ENCODE measurements at regions of chr2 and their contacts with region 1.

Region 1: GRCh38 chr2:15636972-15637785 is 45.5 kb downstream of the DDX1 start:
- DNase-seq: peak; percentile 66 to 87
- ATAC-seq: peak; percentile 90
- H3K4me3 ChIP-seq: no peak overlapping the region
- H3K27ac ChIP-seq: peak overlapping the region in 1 of 2 donors; percentile 37
- H3K4me1 ChIP-seq: peaks cover 6 to 9% of the 10 kb centered on the region in 2 donors
- H3K27me3 ChIP-seq: no peaks in the 10 kb centered on the region

Region 2: DNA sequence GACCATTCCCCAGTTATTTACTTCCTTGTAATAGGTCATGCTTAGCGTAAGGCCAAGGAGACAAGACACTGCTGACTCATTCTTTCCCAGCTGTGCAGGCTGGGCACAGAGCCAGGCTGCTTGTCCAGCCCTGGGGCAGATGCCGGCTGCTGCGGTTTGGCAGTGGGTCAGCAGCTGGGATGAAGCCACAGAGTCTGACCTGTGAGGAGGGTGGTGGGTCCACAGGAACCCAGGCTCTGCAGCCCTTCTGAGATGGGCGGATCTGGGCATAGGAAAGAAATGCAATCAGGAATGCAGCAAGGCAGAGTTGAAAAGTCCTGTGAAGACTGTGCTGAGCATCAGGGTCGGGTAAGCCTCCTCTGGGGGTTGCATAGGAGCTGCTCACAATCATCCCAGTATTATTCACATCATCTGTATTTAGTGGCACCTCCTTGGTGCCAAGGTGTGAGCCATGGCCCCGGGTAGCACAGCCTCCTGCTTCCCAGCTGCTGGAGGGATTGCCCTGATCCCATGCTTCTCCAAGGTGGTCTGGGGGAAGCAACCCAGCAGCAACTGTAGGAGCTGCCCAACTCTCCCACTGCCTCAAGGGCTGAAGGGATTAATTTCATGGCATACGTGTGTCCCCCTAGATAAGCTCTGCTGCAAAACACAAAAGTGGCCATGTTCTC is 93.5 kb after region 1 on chr2:
- intact Hi-C with region 1: loop called in 1 of 2 experiments (anchors 5 kb)
- DNase-seq: peak; percentile 97 to 98
- ATAC-seq: peak; percentile 88
- H3K4me3 ChIP-seq: no peak overlapping the region
- H3K27ac ChIP-seq: no peak overlapping the region
- H3K4me1 ChIP-seq: peaks cover 3 to 4% of the 10 kb centered on the region in 2 donors
- H3K27me3 ChIP-seq: no peaks in the 10 kb centered on the region

Region 3: GRCh38 chr2:15749460-15750432 is 112.6 kb after region 1 on chr2:
- intact Hi-C with region 1: loop called in 1 of 2 experiments (anchors 1 kb)
- DNase-seq: no peak
- ATAC-seq: peak; percentile 62
- H3K4me3 ChIP-seq: no peak overlapping the region
- H3K27ac ChIP-seq: peak overlapping the region; percentile 10 to 29
- H3K4me1 ChIP-seq: peaks cover 4 to 5% of the 10 kb centered on the region in 2 donors
- H3K27me3 ChIP-seq: no peaks in the 10 kb centered on the region

Region 4: DNA sequence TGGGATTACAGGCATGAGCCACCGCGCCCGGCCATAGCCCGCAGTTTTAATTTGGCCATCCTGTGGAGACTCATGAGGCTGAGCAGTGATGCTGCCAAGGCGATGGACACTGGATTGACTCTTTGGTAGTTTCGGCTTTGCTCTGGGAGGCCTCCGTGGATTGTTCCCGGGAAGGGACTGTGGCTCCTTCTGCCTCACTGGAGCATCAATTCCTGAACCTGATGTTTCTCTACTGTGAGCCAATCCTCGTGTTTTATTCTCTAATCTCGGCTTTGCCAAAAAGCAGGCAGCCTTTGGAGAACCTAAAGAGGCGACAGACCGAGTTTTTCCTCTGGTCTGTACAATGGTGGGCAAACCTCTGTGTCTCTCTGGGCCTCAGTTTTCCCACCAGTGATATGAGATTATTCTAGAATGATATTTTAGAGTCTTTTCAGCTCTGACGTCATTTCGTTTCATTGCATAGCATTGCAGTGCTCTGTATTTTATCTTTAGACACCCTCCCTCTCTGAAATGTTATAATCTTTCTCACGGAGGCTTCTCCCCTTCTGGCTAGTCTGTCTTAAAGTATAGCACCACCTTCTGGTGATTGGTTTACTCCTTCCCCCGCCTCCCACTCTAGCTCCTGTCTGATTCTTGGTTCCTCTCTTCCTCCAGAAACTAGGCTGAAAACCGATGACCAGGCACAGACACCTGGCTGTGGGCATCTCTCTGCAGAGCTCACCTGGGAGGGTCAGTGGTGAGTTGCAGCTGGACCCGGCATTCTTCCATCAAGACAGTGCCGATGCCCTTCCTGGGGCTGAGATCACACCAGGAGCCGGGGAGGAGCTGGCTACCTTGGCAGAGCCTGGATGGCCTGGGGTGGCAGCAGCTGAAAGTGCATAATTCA is 644.5 kb after region 1 on chr2:
- intact Hi-C with region 1: loop called (anchors 2 to 10 kb)
- DNase-seq: no peak
- ATAC-seq: no peak
- H3K4me3 ChIP-seq: no peak overlapping the region
- H3K27ac ChIP-seq: no peak overlapping the region
- H3K4me1 ChIP-seq: no peaks in the 10 kb centered on the region
- H3K27me3 ChIP-seq: peaks cover 0 to 3% of the 10 kb centered on the region in 2 donors

Region 5: GRCh38 chr2:16507655-16508489 is 870.7 kb after region 1 on chr2:
- intact Hi-C with region 1: loop called (anchors 5 to 10 kb)
- DNase-seq: peak; percentile 47 to 79
- ATAC-seq: peak; percentile 34
- H3K4me3 ChIP-seq: peak overlapping the region; percentile 21 to 39
- H3K27ac ChIP-seq: no peak overlapping the region
- H3K4me1 ChIP-seq: no peaks in the 10 kb centered on the region
- H3K27me3 ChIP-seq: no peaks in the 10 kb centered on the region

Region 6: GRCh38 chr2:16608661-16609643 is 971.8 kb after region 1 on chr2:
- intact Hi-C with region 1: loop called (anchors 2 kb)
- DNase-seq: peak; percentile 85 to 94
- ATAC-seq: peak; percentile 92
- H3K4me3 ChIP-seq: peak overlapping the region in 1 of 2 donors; percentile 11
- H3K27ac ChIP-seq: no peak overlapping the region
- H3K4me1 ChIP-seq: no peaks in the 10 kb centered on the region
- H3K27me3 ChIP-seq: no peaks in the 10 kb centered on the region

Region 7: GRCh38 chr2:16756831-16757644 is 1119.9 kb after region 1 on chr2:
- intact Hi-C with region 1: loop called in 1 of 2 experiments (anchors 10 kb)
- DNase-seq: peak; percentile 80 to 93
- ATAC-seq: peak; percentile 94
- H3K4me3 ChIP-seq: no peak overlapping the region
- H3K27ac ChIP-seq: no peak overlapping the region
- H3K4me1 ChIP-seq: no peaks in the 10 kb centered on the region
- H3K27me3 ChIP-seq: no peaks in the 10 kb centered on the region

Measured in aorta (tissue), 5 donors.